Head of caudate nucleus (tissue), 42 donors: ENCODE measurements at regions of chr2 and their contacts with region 1.

Region 1: GRCh38 chr2:3575534-3576262 is 638 bp downstream of the RPS7 start:
- DNase-seq: peak in 5 of 42 donors; percentile 9 to 38 (median 12)

Region 2: GRCh38 chr2:3379647-3380534 is 195.8 kb before region 1 on chr2 and contains the start of gene TRAPPC12:
- intact Hi-C with region 1: loop called (anchors 5 kb)
- DNase-seq: peak; percentile 87 to 97 (median 94)

Region 3: DNA sequence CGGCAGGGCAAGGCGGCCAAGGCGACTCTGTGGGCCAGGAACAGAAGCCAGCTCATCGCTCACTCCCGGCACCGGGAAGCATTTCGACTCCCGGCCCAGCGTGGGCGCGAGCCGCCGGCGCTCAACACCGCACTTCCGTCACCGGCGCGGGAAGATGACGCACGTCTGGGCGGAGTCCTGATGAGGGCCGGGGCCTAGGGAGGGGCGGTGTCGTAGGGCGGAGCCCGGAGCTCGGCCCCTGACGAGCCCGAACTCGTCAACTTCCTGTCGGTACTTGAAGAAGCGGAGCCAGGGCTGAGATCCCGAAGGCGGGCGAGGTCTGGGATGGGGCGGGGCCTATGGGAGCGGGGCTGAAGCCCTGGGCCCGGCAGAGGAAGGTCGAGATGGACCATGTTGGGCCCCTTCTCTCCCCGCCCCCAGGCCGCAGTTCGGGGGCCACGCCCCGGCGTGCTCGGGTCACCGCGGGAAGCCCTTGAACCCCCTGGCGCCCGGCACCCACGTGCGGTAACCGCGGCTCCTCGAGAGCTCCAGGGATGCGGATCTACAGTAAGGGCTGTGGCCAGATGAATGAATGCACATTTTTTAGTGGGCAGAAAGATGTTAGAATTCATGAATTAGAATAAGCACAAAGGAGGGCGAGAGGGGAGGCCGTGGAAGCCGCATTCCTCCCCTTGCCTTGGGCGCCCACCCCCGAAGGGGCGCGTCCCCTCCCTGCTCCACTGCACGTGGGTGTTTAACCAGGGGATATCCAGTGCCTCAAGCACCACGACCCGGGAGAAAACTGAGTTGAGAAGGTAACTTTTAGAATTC is 17.3 kb before region 1 on chr2 and contains the start of gene RNASEH1:
- intact Hi-C with region 1: loop called (anchors 2 kb)
- DNase-seq: peak; percentile 93 to 100 (median 99)

Region 4: DNA sequence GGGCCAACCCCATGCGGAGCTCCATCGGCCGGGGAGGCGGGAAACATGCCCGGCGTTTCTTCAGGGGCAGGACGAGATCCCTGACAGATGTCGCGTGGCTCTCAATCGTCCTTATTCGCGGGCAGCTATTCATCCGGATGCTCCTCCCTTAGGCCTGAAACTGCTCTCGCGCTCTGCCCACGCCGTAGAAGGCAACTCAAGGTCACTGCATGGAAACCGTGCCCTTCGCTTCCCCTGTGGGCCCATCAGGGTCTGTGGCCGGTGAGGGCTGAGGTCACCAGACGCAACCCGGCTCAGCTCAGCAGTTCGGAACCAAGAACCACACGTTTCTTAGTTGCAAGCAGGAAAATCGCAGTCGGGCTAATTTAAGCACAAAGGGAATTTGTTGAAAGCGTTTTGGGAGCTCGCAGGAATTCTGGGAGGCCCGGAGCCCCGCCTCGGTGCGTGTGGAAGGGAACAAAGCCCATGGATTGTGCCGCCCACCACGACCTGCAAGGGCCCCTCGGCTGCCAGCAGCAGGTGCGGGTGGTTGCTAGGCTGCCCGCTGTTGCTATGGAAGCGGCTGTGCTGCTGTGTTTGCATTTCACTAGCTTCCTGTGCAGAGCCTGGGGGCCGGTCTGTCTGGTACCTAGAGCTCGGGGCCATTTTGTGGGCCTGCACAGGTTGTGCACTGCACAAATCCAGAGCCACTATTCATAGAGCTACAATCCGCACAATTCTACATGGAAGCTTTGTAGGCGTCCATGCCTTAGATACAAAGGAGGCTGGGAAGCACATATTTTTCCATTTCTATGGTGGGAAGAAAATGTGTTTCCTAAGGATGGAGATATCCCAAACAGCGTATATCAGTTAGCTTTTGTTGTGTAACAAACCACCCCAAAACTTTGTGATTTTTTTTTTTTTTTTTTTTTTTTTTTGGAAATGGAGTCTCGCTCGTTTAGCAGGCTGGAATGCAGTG is 76.3 kb after region 1 on chr2:
- intact Hi-C with region 1: loop called (anchors 5 kb)
- DNase-seq: peak; percentile 68 to 95 (median 86)